ENCODE measurements at regions of chr14 and their contacts with region 1.

Region 1: GRCh38 chr14:34300882-34301734 is 160.9 kb downstream of the SPTSSA start:
- DNase-seq: peak in 1 of 2 experiments; percentile 17
- H3K4me3 ChIP-seq: no peak overlapping the region
- H3K27ac ChIP-seq: no peak overlapping the region
- H3K4me1 ChIP-seq: no peaks in the 10 kb centered on the region
- H3K27me3 ChIP-seq: no peaks in the 10 kb centered on the region
- CTCF ChIP-seq: peak; percentile 79

Region 2: GRCh38 chr14:32576088-32576795 is 1724.9 kb before region 1 on chr14:
- CTCF ChIA-PET with region 1: no interaction called
- POLR2A ChIA-PET with region 1: no interaction called
- intact Hi-C with region 1: loop called (anchors 1 kb)
- DNase-seq: peak; percentile 15 to 39
- H3K4me3 ChIP-seq: no peak overlapping the region
- H3K27ac ChIP-seq: no peak overlapping the region
- H3K4me1 ChIP-seq: no peaks in the 10 kb centered on the region
- H3K27me3 ChIP-seq: no peaks in the 10 kb centered on the region
- CTCF ChIP-seq: peak; percentile 88

Region 3: DNA sequence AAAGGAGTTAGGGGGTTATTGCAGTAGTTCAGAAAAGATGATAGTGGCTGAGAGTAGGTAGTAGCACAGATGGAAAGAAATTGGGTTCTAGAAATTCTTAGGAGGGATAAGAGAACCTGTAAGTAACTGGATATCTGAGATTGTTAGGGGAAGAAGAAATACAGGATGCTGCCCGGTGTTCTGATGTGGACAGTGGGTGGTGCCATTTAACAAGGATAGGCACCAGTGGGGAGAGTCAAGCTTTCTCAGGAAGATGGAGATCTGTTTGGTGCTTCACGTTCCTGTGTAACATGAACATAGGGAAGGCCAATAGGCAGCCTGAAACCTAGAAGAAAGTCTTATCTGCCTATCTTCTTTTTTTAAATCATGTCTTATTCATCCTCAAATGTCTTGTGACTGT is 1116.5 kb before region 1 on chr14:
- CTCF ChIA-PET with region 1: no interaction called
- POLR2A ChIA-PET with region 1: no interaction called
- intact Hi-C with region 1: loop called (anchors 5 kb)
- DNase-seq: no peak
- H3K4me3 ChIP-seq: no peak overlapping the region
- H3K27ac ChIP-seq: no peak overlapping the region
- H3K4me1 ChIP-seq: no peaks in the 10 kb centered on the region
- H3K27me3 ChIP-seq: no peaks in the 10 kb centered on the region
- CTCF ChIP-seq: no peak; the same call in 1 of the 2 replicates

Region 4: GRCh38 chr14:33848706-33849454 is 452.2 kb before region 1 on chr14:
- CTCF ChIA-PET with region 1: interaction called, 3 read pairs
- POLR2A ChIA-PET with region 1: no interaction called
- intact Hi-C with region 1: loop called (anchors 5 kb)
- DNase-seq: peak; percentile 51 to 77
- H3K4me3 ChIP-seq: no peak overlapping the region
- H3K27ac ChIP-seq: no peak overlapping the region
- H3K4me1 ChIP-seq: no peaks in the 10 kb centered on the region
- H3K27me3 ChIP-seq: no peaks in the 10 kb centered on the region
- CTCF ChIP-seq: peak; percentile 64

Region 5: DNA sequence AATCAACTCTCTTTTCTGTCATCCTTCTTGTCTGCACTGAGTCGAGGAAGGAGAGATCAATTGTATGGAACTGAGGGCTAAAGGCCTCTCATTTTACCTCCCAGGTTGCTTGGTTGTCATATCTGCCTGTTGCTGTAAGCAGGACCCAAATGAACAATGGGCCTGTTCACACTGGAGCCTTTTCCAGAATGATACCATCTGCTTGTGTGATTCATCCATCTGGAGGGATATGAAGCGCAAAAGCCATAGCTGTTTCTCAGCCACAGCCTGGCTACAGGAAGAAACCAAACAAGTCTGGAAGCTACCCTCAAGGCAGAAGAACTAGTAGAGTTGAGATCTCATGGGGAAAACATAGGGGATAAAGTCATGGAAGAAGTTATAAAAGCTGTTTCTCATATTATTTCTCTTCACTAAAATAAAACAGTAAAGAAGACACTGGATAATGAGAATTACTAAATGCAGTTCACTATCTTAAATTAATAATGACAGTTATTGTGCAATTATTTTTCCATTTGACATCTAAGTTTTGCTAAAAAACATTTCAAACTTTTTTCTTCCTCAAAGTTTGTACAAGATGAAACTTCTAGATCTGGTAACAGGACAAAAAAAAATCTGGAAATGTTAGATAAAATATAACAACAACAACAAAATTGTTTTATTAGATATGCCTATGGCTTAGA is 54.6 kb after region 1 on chr14:
- CTCF ChIA-PET with region 1: interaction called, 13 read pairs
- POLR2A ChIA-PET with region 1: no interaction called
- intact Hi-C with region 1: no loop called
- DNase-seq: peak; percentile 19 to 47
- H3K4me3 ChIP-seq: no peak overlapping the region
- H3K27ac ChIP-seq: peak overlapping the region; percentile 47
- H3K4me1 ChIP-seq: no peaks in the 10 kb centered on the region
- H3K27me3 ChIP-seq: no peaks in the 10 kb centered on the region
- CTCF ChIP-seq: no peak

Measured in PC-9 (cell line).